ENCODE measurements at regions of chr7 and their contacts with region 1.

Region 1: DNA sequence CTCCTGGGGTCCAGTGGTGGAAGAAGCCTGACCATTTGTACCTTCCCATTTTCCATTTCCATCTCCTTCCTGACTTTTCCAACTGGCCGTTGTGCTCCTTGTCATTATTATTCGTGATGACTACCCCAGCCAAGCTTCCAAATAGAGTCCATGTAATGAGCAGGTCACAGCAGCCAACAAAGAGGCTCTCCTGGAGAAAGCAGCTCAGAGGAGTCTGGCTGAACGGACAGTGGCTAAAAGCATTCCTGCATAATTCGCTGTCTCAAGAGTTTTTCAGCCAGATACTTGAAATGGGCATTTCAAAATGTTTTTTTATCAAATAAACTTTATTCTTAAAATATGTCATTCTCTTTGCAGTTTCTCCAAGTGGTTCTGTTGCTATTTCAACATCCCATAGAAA is 458.6 kb downstream of the INHBA start:
- DNase-seq: no peak
- H3K4me3 ChIP-seq: no peak overlapping the region
- H3K4me3 Mint-ChIP-seq: no peak overlapping the region
- H3K27ac Mint-ChIP-seq: no peak overlapping the region
- H3K4me1 ChIP-seq: peaks cover 25% of the 10 kb centered on the region
- H3K4me1 Mint-ChIP-seq: peaks cover 34% of the 10 kb centered on the region
- H3K27me3 ChIP-seq: no peaks in the 10 kb centered on the region
- H3K27me3 Mint-ChIP-seq: no peaks in the 10 kb centered on the region
- CTCF ChIP-seq: no peak

Region 2: DNA sequence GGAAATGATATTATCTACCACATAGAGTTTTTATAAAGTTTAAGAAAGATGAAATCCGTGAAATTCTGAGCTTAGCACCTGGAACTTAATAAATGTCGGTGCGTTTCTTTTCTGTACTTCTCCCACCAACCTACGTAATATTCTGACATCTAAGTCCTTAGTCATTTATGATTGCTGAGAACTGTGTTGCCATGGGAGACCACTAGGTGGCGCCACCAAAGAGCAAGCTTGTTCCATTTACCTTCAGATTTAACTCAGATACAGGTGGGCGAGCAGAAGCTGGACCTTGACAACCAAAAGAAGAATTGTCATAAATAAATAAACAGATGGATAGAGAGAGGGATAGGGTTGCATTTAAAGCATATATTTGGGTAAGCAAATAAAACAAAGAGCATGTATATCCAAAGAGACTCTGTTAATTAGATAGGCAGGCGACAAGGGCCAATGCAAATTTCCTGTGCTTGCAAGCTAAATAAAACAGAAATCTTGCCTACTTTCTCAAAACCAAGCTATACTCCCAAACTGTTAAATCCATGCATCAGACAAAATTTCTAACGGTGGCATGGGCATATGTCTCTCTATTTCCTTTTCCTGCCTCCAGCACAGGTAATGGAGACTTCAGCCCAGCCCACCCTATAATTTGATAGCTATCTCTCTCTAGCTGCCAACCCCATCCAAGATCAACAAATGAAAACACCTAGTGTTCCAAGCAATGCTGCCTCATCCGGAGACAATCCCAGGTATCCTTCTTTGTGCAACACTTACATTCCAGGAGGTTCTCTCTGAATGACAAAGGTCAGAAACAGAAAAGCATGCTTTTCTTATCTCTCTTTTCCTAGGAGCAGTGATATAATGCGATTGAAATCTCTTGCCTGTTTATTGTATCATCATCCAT is 241.0 kb before region 1 on chr7:
- CTCF ChIA-PET with region 1: no interaction called
- POLR2A ChIA-PET with region 1: no interaction called
- intact Hi-C with region 1: loop called (anchors 5 kb)
- DNase-seq: peak; percentile 69 to 75
- H3K4me3 ChIP-seq: no peak overlapping the region
- H3K4me3 Mint-ChIP-seq: peak overlapping the region; percentile 45
- H3K27ac Mint-ChIP-seq: peak overlapping the region; percentile 88
- H3K4me1 ChIP-seq: peaks cover 36% of the 10 kb centered on the region
- H3K4me1 Mint-ChIP-seq: peaks cover 23% of the 10 kb centered on the region
- H3K27me3 ChIP-seq: no peaks in the 10 kb centered on the region
- H3K27me3 Mint-ChIP-seq: no peaks in the 10 kb centered on the region
- CTCF ChIP-seq: peak; percentile 70 to 85

Region 3: DNA sequence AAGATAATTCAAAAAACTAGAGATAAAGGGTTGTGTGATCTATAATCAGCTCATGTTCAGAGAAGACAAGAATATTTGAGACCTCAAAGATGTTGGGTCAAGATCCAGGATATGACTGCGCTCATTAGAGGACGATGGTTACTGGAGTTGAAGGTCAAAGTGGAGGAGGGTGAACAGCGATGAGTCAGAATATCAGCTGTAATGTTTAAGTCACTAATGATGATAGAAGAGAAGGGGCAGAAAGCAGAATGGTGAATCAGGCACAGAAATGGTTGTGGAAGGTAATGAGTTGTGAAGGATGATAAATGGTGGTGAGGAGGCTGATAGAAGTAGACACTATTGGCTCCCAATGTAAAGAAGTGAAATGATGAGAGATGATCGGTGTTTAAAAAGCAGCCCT is 81.6 kb before region 1 on chr7:
- CTCF ChIA-PET with region 1: no interaction called
- POLR2A ChIA-PET with region 1: no interaction called
- intact Hi-C with region 1: no loop called
- DNase-seq: no peak
- H3K4me3 ChIP-seq: no peak overlapping the region
- H3K4me3 Mint-ChIP-seq: no peak overlapping the region
- H3K27ac Mint-ChIP-seq: no peak overlapping the region
- H3K4me1 ChIP-seq: no peaks in the 10 kb centered on the region
- H3K4me1 Mint-ChIP-seq: no peaks in the 10 kb centered on the region
- H3K27me3 ChIP-seq: no peaks in the 10 kb centered on the region
- H3K27me3 Mint-ChIP-seq: no peaks in the 10 kb centered on the region
- CTCF ChIP-seq: no peak

Region 4: DNA sequence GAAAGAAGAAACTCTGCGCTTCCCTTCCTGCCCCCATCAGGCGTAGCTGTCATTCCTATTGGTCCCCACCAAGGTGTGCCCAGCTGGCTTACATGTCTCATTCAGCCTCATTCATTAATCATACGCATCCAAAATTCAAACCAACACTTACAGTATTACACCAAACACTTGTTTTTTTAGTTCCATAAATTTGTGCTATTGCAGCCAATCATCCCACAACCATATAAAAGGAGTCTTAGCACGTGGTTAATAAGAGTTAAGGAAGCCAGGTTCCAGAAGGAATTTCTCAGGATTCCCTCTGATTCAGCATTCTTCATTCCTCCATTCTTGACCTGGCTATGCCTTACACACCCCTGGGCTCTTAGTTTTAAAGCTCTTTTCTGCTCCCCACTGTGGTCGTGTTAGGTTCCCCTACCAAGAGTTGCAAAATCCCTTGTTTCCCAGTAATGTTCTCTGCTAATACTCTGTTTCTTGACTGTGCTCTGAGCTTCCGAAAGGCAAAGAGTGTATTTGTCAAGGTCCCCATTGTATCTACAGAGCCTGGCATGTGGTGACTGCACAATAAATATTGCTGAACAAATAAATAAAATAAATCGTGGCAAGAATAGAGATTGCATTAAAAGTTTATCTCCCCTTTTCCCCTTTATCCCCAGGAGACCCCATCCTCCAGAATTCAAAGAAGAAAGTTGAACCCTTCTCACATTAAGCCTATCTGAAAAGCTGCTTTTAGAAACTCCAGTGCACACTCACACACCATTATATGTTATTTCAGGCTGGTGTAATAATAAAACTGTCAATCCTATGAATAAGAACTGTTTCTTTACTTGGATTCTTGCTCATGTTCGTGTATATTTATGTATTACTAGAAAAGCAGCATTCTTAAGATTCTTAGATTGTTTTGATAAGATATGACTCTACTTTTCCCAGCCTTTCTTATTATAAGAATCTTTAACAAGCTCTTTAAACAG is 55.8 kb before region 1 on chr7:
- CTCF ChIA-PET with region 1: no interaction called
- POLR2A ChIA-PET with region 1: no interaction called
- intact Hi-C with region 1: loop called (anchors 1 kb)
- DNase-seq: peak; percentile 52 to 62
- H3K4me3 ChIP-seq: no peak overlapping the region
- H3K4me3 Mint-ChIP-seq: peak overlapping the region; percentile 70
- H3K27ac Mint-ChIP-seq: peak overlapping the region; percentile 97
- H3K4me1 ChIP-seq: peaks cover 40% of the 10 kb centered on the region
- H3K4me1 Mint-ChIP-seq: peaks cover 21% of the 10 kb centered on the region
- H3K27me3 ChIP-seq: no peaks in the 10 kb centered on the region
- H3K27me3 Mint-ChIP-seq: no peaks in the 10 kb centered on the region
- CTCF ChIP-seq: no peak

Region 5: DNA sequence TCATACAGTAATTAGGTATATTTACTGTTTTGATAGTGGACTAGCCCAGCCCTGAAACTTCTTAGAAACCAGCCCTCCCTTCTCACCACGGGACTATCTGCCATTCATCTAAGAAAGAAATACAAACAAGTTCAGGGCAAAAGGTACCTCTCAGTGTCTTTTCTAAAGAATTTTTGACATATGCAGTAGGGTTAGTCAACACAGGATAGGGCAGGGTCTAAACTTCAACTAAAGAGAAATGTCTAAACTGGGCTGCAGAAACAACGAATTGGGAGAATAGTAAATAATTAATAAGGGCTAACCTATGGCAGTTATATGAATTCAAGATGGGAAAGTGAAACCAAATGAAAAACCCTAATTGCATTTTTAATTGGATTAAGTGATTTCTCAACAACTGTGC is 38.0 kb before region 1 on chr7:
- CTCF ChIA-PET with region 1: no interaction called
- POLR2A ChIA-PET with region 1: no interaction called
- intact Hi-C with region 1: loop called (anchors 1 kb)
- DNase-seq: peak in 1 of 2 experiments; percentile 47
- H3K4me3 ChIP-seq: no peak overlapping the region
- H3K4me3 Mint-ChIP-seq: peak overlapping the region; percentile 68
- H3K27ac Mint-ChIP-seq: peak overlapping the region; percentile 84
- H3K4me1 ChIP-seq: peaks cover 20% of the 10 kb centered on the region
- H3K4me1 Mint-ChIP-seq: peaks cover 16% of the 10 kb centered on the region
- H3K27me3 ChIP-seq: no peaks in the 10 kb centered on the region
- H3K27me3 Mint-ChIP-seq: no peaks in the 10 kb centered on the region
- CTCF ChIP-seq: no peak

Region 6: DNA sequence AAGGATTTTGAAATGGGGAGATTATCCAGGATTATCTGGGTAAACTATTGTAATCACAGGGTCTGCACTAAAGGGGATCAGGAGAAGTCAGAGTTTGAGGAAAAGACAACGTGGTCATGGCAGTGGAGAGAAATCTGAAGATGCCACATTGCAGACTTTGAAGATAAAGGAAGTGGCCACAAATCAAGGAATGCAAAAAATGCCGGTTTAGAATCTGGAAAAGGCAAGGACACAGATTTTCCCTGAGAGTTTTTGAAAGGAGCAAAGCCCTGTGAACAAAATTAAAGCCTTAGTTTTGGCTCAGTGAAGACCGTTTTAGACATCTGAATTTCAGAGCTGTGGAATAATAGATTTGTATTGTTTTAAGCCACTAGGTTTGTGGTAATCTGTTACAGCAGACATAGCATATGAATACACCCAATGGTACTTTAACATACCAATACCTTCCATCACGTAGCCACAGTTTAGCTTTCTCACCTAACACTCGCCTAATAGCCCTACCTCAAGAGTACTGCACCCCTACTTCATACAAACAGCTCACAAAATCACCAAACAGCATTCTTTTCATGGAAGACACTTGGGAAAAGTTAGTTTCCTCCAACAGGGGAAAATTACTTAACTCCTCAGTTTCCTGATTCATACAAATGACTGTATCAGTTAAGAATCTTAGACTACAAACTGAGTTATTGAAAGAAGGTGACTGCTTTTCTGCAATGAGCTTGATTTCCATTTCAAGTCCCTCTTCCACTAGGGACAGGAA is 12.1 kb after region 1 on chr7:
- CTCF ChIA-PET with region 1: no interaction called
- POLR2A ChIA-PET with region 1: no interaction called
- intact Hi-C with region 1: loop called (anchors 2 kb)
- DNase-seq: peak in 1 of 2 experiments; percentile 4
- H3K4me3 ChIP-seq: no peak overlapping the region
- H3K4me3 Mint-ChIP-seq: no peak overlapping the region
- H3K27ac Mint-ChIP-seq: peak overlapping the region; percentile 61
- H3K4me1 ChIP-seq: peaks cover 11% of the 10 kb centered on the region; the same call in 1 of the 2 replicates
- H3K4me1 Mint-ChIP-seq: peaks cover 33% of the 10 kb centered on the region
- H3K27me3 ChIP-seq: no peaks in the 10 kb centered on the region
- H3K27me3 Mint-ChIP-seq: no peaks in the 10 kb centered on the region
- CTCF ChIP-seq: no peak

Region 7: GRCh38 chr7:41705109-41705901 is 461.1 kb after region 1 on chr7:
- CTCF ChIA-PET with region 1: no interaction called
- POLR2A ChIA-PET with region 1: no interaction called
- intact Hi-C with region 1: loop called (anchors 2 kb)
- DNase-seq: peak; percentile 90 to 91
- H3K4me3 ChIP-seq: peak overlapping the region; percentile 43
- H3K4me3 Mint-ChIP-seq: peak overlapping the region; percentile 78
- H3K27ac Mint-ChIP-seq: no peak overlapping the region
- H3K4me1 ChIP-seq: no peaks in the 10 kb centered on the region
- H3K4me1 Mint-ChIP-seq: peaks cover 14% of the 10 kb centered on the region
- H3K27me3 ChIP-seq: no peaks in the 10 kb centered on the region
- H3K27me3 Mint-ChIP-seq: peaks cover 3% of the 10 kb centered on the region
- CTCF ChIP-seq: peak; percentile 79 to 94

Measured in Caco-2 (cell line).